Caco-2 (cell line): ENCODE measurements at regions of chr14 and their contacts with region 1.

Region 1: DNA sequence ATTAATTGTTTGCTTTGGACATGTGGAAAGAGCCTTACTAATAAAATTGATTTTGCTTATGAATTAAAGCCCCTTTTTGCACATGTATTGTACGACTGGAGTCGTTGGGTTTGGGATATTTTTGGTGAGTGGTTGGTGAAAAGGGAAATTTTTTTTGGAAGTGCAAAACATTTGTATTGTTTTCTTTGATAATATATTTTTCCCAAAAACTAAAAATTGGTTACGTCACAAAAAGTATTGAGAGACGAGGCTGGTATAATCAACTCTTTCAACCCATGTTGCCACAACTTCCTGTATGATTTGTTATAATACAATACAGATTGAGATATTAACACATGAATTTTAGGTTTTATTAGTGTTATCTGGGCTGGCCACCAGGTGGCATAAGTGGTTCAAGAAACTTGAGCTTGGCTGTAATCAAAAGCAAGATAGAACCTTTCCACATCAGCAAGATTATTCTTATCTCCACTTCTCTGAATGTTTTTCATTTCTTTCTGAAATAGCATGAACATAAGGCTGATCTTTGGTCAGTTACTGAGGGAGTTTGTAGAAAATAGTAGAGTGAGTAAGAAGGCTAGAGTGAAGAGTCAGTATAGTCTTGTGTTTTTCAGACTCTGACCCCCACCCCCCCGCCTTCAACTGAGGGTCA is 8.7 kb downstream of the NGDN start:
- DNase-seq: peak in 1 of 2 experiments; percentile 71
- H3K4me3 ChIP-seq: no peak overlapping the region
- H3K4me3 Mint-ChIP-seq: no peak overlapping the region
- H3K27ac Mint-ChIP-seq: no peak overlapping the region
- H3K4me1 ChIP-seq: no peaks in the 10 kb centered on the region
- H3K4me1 Mint-ChIP-seq: no peaks in the 10 kb centered on the region
- H3K27me3 ChIP-seq: no peaks in the 10 kb centered on the region
- H3K27me3 Mint-ChIP-seq: no peaks in the 10 kb centered on the region
- CTCF ChIP-seq: peak; percentile 72 to 77

Region 2: GRCh38 chr14:23286020-23286905 is 192.0 kb before region 1 on chr14 and contains the start of gene HOMEZ:
- CTCF ChIA-PET with region 1: no interaction called
- POLR2A ChIA-PET with region 1: no interaction called
- intact Hi-C with region 1: no loop called
- DNase-seq: peak; percentile 99
- H3K4me3 ChIP-seq: peak within 1 kb of the TSS; percentile 75
- H3K4me3 Mint-ChIP-seq: peak within 1 kb of the TSS; percentile 90
- H3K27ac Mint-ChIP-seq: peak within 1 kb of the TSS; percentile 95
- H3K4me1 ChIP-seq: 0 out of 2 replicates have a peak, but pooled peaks cover 4% of the 10 kb centered on the region
- H3K4me1 Mint-ChIP-seq: peaks cover 6% of the 10 kb centered on the region
- H3K27me3 ChIP-seq: no peaks in the 10 kb centered on the region
- H3K27me3 Mint-ChIP-seq: no peaks in the 10 kb centered on the region
- CTCF ChIP-seq: peak in 1 of 2 experiments; percentile 18
- total RNA-seq, gene HOMEZ: 7.4 and 7.6 TPM in 2 replicates

Region 3: DNA sequence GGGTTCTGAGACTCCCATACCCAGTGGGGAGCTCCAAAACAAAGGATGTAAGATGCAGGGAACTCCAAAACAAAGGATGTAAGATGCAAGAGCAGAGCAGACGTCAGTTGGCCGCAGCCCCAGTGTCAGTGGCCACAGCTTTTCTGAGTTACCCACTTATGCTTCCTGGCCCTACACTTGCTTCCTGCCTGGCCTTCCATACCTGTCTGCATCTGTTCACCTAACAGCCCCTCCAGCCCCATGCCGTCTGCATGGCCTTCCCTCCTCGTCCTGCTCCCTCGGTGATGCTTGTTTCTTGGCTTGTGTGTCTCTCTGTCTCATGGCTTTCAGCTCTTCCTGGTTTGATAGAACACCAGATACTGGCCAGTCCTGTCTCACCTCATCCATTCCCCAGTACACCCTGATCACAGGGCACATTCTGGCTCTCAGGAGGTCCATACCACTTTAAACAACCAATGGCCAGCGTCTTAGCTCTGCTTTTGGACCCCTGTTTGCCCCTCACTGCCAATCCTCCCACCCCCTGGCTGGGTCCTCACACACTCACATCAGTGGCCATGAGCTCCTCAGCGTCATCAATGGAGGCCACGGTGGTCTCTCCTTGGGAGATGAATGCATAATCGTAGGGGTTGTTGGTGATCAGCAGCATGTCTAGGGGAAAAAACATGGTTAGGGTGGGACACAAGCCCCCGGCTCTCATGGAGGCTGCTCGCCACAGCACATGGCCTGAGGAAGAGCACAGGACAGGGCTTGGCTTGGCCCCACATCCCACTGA is 48.0 kb before region 1 on chr14:
- CTCF ChIA-PET with region 1: no interaction called
- POLR2A ChIA-PET with region 1: no interaction called
- intact Hi-C with region 1: no loop called
- DNase-seq: peak in 1 of 2 experiments; percentile 22
- H3K4me3 ChIP-seq: no peak overlapping the region
- H3K4me3 Mint-ChIP-seq: no peak overlapping the region
- H3K27ac Mint-ChIP-seq: no peak overlapping the region
- H3K4me1 ChIP-seq: peaks cover 3% of the 10 kb centered on the region
- H3K4me1 Mint-ChIP-seq: no peaks in the 10 kb centered on the region
- H3K27me3 ChIP-seq: no peaks in the 10 kb centered on the region; the same call in 1 of the 2 replicates
- H3K27me3 Mint-ChIP-seq: peaks cover 4% of the 10 kb centered on the region
- CTCF ChIP-seq: no peak

Region 4: DNA sequence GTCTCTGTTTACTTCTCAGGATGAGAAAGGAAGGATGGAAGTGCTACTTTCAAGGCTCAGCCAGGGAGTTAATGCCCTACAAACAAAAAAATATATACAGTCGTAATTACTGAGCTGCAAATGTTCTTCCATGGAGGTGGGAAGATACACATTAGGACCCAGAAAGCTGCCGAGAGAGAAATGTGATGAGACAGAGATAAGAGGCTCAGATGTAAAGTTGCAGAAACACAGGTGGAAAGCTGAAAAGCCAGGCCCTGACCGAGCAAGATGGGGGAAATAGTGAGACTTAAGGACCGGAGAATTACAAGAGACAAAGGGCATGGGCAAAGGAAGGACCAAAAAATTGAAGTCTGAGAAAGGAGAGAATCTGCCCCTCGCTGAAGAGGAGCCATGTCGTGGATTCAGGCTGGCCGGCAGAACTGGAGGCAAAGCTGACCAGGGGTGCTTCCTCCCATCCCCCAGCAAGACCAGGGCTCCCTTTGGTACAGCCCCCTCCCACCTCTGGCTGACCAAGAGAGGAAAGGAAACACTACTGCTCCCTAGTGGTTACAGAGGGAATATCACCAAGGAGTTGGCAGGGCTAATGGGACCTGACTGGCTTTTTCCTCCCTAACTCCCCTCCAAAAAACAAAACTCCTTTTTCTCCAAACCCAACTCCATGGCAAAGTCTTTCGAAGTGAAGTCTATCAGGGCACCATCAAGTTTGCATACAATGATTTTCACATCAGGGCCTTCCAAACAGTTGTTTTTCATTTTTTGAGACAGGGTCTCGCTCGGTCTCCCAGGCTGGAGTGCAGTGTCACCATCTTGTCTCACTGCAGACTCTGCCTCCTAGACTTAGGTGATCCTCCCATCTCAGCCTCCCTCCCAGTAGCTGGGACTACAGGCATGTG is 61.3 kb after region 1 on chr14:
- CTCF ChIA-PET with region 1: interaction called, 7 read pairs
- POLR2A ChIA-PET with region 1: no interaction called
- intact Hi-C with region 1: loop called (anchors 1 kb)
- DNase-seq: peak in 1 of 2 experiments; percentile 74
- H3K4me3 ChIP-seq: no peak overlapping the region
- H3K4me3 Mint-ChIP-seq: no peak overlapping the region
- H3K27ac Mint-ChIP-seq: no peak overlapping the region
- H3K4me1 ChIP-seq: no peaks in the 10 kb centered on the region
- H3K4me1 Mint-ChIP-seq: peaks cover 15% of the 10 kb centered on the region
- H3K27me3 ChIP-seq: no peaks in the 10 kb centered on the region
- H3K27me3 Mint-ChIP-seq: no peaks in the 10 kb centered on the region
- CTCF ChIP-seq: peak; percentile 68 to 83